Posterior vena cava (tissue), 2 donors: ENCODE measurements at regions of chr20 and their contacts with region 1.

Region 1: DNA sequence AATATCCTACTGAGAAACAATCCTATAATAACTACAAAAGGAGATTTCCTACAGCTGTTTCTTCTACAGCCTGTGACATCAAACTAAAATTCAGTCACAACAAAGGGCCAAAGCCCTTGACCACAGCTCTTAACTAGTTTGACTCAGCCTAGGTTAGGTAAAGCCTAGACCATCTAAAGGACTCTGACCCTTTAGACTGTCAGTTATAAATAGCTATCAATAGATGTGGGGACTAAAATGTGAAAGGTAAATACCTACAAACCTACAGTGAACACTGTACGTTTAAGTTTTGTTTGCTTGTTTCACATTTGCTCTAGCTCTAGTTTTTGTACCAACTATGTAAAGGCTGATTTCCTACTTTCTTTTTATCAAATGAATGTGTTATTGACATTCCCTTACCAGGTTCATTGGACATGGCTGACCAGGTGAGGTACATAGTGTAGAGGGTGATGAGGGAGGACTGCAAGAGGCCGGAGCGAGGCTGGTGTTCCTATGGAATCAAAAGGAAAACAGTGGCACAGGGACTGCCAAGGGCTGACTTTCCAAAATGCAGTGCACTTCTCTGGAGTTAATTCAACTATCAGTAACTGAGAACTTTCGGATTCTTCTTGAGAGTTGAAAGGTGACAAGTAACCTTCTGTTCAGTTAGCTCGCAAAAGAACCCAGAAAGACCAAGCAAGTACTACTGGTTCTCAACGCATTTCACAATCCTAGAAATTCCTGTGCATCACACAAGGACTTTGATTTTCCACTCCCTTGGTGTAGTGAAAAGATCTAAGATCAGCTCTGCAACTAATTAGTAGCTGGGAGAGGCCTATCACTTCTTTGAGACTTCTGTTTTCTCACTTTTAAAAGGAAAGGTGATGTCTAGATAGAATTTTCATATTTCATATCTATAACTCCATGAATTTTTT is 17.2 kb downstream of the SERINC3 start:
- DNase-seq: no peak

Region 2: DNA sequence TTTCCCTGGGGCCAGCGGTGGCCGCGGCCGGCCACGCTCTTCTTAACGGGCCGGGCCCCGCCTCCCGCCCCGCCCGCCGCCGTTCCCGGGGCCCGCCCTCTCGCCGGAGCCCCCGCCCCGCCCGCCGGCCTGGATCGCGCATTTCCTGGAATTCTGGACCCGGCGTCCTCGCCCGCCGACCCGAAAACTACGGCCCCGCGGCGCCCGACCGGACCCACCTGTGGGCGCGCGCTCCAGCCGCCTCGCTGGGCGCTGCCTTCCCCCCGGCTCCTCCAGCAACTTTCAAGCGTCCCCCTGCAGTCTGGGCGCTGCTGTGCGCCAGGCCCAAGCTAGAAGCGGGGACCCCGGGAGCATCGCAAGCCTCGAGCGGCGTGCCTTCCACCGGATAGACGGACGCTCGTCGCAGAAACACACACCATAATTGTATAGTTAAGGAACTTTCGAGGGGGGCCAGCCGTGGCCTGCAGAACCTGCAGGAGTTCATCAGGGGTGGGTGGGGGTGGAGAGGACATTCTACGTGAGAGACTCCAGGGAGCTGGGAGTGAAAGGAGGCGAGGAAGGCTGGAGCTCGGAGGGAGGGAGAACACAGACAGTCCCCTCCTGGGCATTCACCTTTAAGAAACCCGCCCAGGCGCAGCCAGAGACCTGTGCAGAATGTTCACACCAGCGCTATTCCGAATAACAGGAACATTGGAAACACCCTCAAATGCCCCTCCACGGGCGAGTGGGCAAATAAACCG is 147.2 kb after region 1 on chr20 and contains the start of gene ADA:
- intact Hi-C with region 1: no loop called
- DNase-seq: peak; percentile 90
- total RNA-seq, gene ADA: 11.0 to 17.7 TPM

Region 3: GRCh38 chr20:45788351-45788750 is 1283.7 kb after region 1 on chr20:
- intact Hi-C with region 1: loop called in 1 of 2 experiments (anchors 5 kb)
- DNase-seq: no peak